Uterus (tissue), 4 donors: ENCODE measurements at regions of chr13 and their contacts with region 1.

Region 1: DNA sequence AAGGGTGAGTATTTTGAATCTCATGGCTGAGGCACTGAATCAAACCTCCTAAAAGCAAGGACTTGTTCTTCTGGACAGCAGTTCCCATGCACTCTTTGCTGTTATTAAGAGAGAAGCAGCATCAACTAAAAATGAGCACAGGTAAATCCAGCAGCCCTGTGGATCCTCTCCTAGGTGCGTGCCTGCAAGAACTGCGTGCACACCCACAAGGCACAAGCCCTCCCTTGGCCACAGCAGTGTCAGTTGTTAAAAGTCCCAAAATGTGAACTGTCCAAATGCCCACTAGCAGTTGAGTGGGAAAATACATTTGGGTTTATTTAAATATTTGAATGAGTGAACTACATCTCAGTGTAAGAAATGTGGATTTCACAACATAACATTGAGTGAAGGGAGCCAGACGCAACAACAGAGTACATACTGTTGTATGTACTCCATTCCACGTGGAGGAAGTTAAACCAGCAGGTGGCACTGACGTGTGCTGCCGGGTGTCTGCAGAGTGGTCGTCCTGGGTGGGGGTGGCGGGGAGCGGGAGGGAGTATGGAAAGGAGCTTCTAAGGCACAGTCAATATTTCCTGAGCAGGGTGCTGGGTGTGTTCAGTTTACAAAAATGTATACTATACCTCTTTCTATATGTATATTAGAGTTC is 266.4 kb downstream of the NALCN start:
- DNase-seq: no peak
- H3K4me3 ChIP-seq: no peak overlapping the region
- H3K27ac ChIP-seq: no peak overlapping the region
- H3K4me1 ChIP-seq: no peaks in the 10 kb centered on the region
- H3K27me3 ChIP-seq: peaks cover 0 to 3% of the 10 kb centered on the region in 2 donors
- CTCF ChIP-seq: no peak
- POLR2A ChIP-seq: no peak

Region 2: GRCh38 chr13:100917011-100917410 is 232.8 kb before region 1 on chr13:
- intact Hi-C with region 1: no loop called
- DNase-seq: no peak
- H3K4me3 ChIP-seq: no peak overlapping the region
- H3K27ac ChIP-seq: no peak overlapping the region
- H3K4me1 ChIP-seq: no peaks in the 10 kb centered on the region
- H3K27me3 ChIP-seq: no peaks in the 10 kb centered on the region
- CTCF ChIP-seq: no peak
- POLR2A ChIP-seq: no peak

Region 3: DNA sequence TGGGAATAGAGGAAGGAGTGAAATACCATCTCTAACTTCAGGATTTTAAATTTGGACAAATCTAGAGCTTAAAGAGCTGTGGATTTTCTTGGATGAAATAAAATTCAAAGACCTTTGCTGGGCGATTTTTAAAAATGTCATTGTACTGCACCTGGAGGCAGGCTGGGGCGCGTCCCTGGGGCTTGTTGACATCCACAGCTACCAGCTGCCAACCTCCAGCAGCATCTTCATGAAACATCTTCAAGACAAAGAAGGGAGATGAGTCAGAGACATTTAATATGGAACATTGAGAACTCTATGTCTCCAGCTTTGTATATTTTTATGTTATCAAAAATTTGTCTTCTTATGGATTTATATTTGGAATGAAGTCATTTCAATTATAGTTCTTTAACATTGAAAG is 133.9 kb after region 1 on chr13:
- intact Hi-C with region 1: no loop called
- DNase-seq: no peak
- H3K4me3 ChIP-seq: no peak overlapping the region
- H3K27ac ChIP-seq: no peak overlapping the region
- H3K4me1 ChIP-seq: no peaks in the 10 kb centered on the region
- H3K27me3 ChIP-seq: no peaks in the 10 kb centered on the region
- CTCF ChIP-seq: no peak
- POLR2A ChIP-seq: no peak

Region 4: GRCh38 chr13:101474419-101474957 is 324.6 kb after region 1 on chr13:
- intact Hi-C with region 1: loop called (anchors 10 kb)
- DNase-seq: no peak
- H3K4me3 ChIP-seq: no peak overlapping the region
- H3K27ac ChIP-seq: no peak overlapping the region
- H3K4me1 ChIP-seq: no peaks in the 10 kb centered on the region
- H3K27me3 ChIP-seq: no peaks in the 10 kb centered on the region
- CTCF ChIP-seq: no peak
- POLR2A ChIP-seq: no peak